CD4-positive, alpha-beta memory T cell (primary cell): ENCODE measurements at regions of chr11 and their contacts with region 1.

Region 1: DNA sequence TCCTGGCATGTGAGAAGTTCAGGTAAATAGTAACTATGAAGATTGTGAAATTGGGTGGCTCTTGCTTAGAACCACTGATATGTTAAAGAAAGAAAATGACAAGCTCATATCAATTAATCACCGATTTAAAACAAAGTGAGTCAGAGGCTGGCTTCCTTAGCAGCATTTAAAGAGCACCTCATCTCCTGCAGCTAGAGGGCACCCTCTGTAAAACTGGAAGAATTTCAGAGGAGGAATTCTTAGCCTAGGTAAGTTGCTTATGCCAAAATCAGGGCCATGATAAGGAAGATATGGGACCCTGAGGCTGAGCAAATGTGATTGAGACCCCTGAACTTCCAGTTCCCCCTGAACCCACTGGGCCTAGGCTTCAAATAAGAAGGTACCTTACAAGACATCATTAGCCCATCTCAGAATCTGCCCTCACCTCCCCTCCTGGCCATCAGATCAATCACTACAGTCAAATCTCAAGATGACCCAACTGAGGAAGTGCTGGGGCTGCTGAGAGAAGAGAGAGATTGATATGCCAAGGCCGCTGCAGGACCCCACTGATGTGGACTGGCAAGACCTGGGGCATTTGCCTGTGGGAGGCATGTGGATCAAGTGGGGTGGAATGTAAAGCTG is 8.6 kb upstream of the CD3E start:
- DNase-seq: peak; percentile 46 to 59 (median 52)
- H3K4me3 ChIP-seq: no peak overlapping the region
- H3K4me3 Mint-ChIP-seq: peak overlapping the region in 1 of 8 donors; percentile 11
- H3K27ac ChIP-seq: no peak overlapping the region
- H3K27ac Mint-ChIP-seq: peak overlapping the region; percentile 0 to 88 (median 72)
- H3K4me1 ChIP-seq: peaks cover 9% of the 10 kb centered on the region
- H3K4me1 Mint-ChIP-seq: peaks cover 10 to 22% (median 14%) of the 10 kb centered on the region in 4 donors
- H3K27me3 ChIP-seq: no peaks in the 10 kb centered on the region
- H3K27me3 Mint-ChIP-seq: no peaks in the 10 kb centered on the region

Region 2: DNA sequence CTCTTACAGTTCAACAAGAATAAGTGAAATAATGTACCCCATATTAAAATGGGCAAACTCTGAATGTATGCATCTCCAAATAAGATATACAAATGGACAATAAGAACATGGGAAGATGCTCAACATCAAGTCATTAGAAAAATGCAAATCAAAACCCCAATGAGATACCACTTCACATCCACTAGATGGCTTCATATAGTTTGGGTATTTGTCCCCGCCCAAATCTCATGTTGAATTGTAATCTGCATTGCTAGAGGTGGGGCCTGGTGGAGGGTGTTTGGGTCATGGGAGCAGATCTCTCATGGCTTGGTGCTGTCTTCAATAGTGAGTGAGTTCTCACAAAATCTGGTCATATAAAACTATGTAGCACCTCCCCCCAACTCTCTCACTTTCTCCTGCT is 37.5 kb before region 1 on chr11:
- CTCF ChIA-PET with region 1: interaction called, 16 read pairs
- POLR2A ChIA-PET with region 1: no interaction called
- intact Hi-C with region 1: no loop called
- DNase-seq: no peak
- H3K4me3 ChIP-seq: no peak overlapping the region
- H3K4me3 Mint-ChIP-seq: no peak overlapping the region
- H3K27ac ChIP-seq: no peak overlapping the region
- H3K27ac Mint-ChIP-seq: peak overlapping the region in 1 of 7 donors; percentile 43
- H3K4me1 ChIP-seq: peaks cover 24% of the 10 kb centered on the region
- H3K4me1 Mint-ChIP-seq: peaks cover 7 to 19% (median 12%) of the 10 kb centered on the region in 4 donors
- H3K27me3 ChIP-seq: no peaks in the 10 kb centered on the region
- H3K27me3 Mint-ChIP-seq: no peaks in the 10 kb centered on the region

Region 3: GRCh38 chr11:118311518-118311917 is 15.6 kb after region 1 on chr11:
- CTCF ChIA-PET with region 1: interaction called, 44 read pairs
- POLR2A ChIA-PET with region 1: interaction called, 9 read pairs
- intact Hi-C with region 1: no loop called
- DNase-seq: peak in 1 of 5 donors; percentile 24
- H3K4me3 ChIP-seq: no peak overlapping the region
- H3K4me3 Mint-ChIP-seq: peak overlapping the region in 3 of 8 donors; percentile 46 to 74 (median 63)
- H3K27ac ChIP-seq: peak overlapping the region; percentile 35
- H3K27ac Mint-ChIP-seq: peak overlapping the region; percentile 83 to 98 (median 90)
- H3K4me1 ChIP-seq: peaks cover 97% of the 10 kb centered on the region
- H3K4me1 Mint-ChIP-seq: peaks cover 59 to 96% (median 85%) of the 10 kb centered on the region in 4 donors
- H3K27me3 ChIP-seq: no peaks in the 10 kb centered on the region
- H3K27me3 Mint-ChIP-seq: no peaks in the 10 kb centered on the region

Region 4: DNA sequence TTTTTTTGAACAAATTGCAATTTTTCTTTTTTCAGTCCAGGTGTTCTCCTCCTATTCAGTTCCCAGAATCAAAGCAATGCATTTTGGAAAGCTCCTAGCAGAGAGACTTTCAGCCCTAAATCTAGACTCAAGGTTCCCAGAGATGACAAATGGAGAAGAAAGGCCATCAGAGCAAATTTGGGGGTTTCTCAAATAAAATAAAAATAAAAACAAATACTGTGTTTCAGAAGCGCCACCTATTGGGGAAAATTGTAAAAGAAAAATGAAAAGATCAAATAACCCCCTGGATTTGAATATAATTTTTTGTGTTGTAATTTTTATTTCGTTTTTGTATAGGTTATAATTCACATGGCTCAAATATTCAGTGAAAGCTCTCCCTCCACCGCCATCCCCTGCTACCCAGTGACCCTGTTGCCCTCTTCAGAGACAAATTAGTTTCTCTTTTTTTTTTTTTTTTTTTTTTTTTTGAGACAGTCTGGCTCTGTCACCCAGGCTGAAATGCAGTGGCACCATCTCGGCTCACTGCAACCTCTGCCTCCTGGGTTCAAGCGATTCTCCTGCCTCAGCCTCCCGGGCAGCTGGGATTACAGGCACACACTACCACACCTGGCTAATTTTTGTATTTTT is 57.3 kb after region 1 on chr11:
- CTCF ChIA-PET with region 1: interaction called, 20 read pairs
- POLR2A ChIA-PET with region 1: no interaction called
- intact Hi-C with region 1: loop called (anchors 1 kb)
- DNase-seq: peak in 4 of 5 donors; percentile 53 to 64 (median 63)
- H3K4me3 ChIP-seq: no peak overlapping the region
- H3K4me3 Mint-ChIP-seq: no peak overlapping the region
- H3K27ac ChIP-seq: peak overlapping the region; percentile 44
- H3K27ac Mint-ChIP-seq: peak overlapping the region; percentile 86 to 96 (median 93)
- H3K4me1 ChIP-seq: peaks cover 22% of the 10 kb centered on the region
- H3K4me1 Mint-ChIP-seq: peaks cover 22 to 29% (median 24%) of the 10 kb centered on the region in 4 donors
- H3K27me3 ChIP-seq: no peaks in the 10 kb centered on the region
- H3K27me3 Mint-ChIP-seq: no peaks in the 10 kb centered on the region

Region 5: DNA sequence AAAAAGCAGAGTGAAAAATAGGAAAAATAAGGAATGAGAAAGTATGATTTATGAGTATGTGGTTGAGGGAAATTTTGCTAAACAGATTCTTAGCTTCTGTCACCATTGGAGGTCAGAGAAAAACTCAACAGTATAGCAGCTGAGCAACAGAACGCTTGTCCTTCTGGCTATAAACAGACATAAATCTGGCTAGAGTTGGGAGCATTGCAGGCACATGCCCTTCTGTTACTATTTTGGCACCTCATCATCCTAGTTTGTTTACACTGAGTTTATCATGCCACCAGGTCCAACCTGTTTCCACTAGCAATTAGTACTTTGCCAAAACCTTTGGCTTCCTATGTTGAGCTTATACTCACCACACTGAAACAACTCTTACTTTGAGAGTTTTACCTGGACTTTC is 70.3 kb after region 1 on chr11:
- CTCF ChIA-PET with region 1: interaction called, 40 read pairs
- POLR2A ChIA-PET with region 1: no interaction called
- intact Hi-C with region 1: no loop called
- DNase-seq: no peak
- H3K4me3 ChIP-seq: no peak overlapping the region
- H3K4me3 Mint-ChIP-seq: no peak overlapping the region
- H3K27ac ChIP-seq: no peak overlapping the region
- H3K27ac Mint-ChIP-seq: peak overlapping the region in 4 of 7 donors; percentile 7 to 53 (median 44)
- H3K4me1 ChIP-seq: peaks cover 22% of the 10 kb centered on the region
- H3K4me1 Mint-ChIP-seq: peaks cover 17 to 31% (median 23%) of the 10 kb centered on the region in 4 donors
- H3K27me3 ChIP-seq: no peaks in the 10 kb centered on the region
- H3K27me3 Mint-ChIP-seq: no peaks in the 10 kb centered on the region

Region 6: GRCh38 chr11:118488480-118489109 is 192.7 kb after region 1 on chr11:
- CTCF ChIA-PET with region 1: interaction called, 8 read pairs
- POLR2A ChIA-PET with region 1: no interaction called
- intact Hi-C with region 1: loop called (anchors 1 kb)
- DNase-seq: peak; percentile 79 to 83 (median 81)
- H3K4me3 ChIP-seq: no peak overlapping the region
- H3K4me3 Mint-ChIP-seq: no peak overlapping the region
- H3K27ac ChIP-seq: peak overlapping the region; percentile 10
- H3K27ac Mint-ChIP-seq: peak overlapping the region; percentile 1 to 79 (median 13)
- H3K4me1 ChIP-seq: no peaks in the 10 kb centered on the region
- H3K4me1 Mint-ChIP-seq: peaks cover 0 to 5% (median 4%) of the 10 kb centered on the region in 4 donors
- H3K27me3 ChIP-seq: no peaks in the 10 kb centered on the region
- H3K27me3 Mint-ChIP-seq: no peaks in the 10 kb centered on the region